PC-9 (cell line): ENCODE measurements at regions of chr11 and their contacts with region 1.

Region 1: GRCh38 chr11:110173811-110174644 is 80.8 kb downstream of the ZC3H12C start:
- DNase-seq: peak in 1 of 2 experiments; percentile 62
- H3K4me3 ChIP-seq: no peak overlapping the region
- H3K27ac ChIP-seq: 0 out of 2 replicates have a peak overlapping the region, but pooled peaks have one; percentile 17
- H3K4me1 ChIP-seq: peaks cover 11% of the 10 kb centered on the region; the same call in 1 of the 2 replicates
- H3K27me3 ChIP-seq: no peaks in the 10 kb centered on the region
- CTCF ChIP-seq: peak; percentile 69

Region 2: GRCh38 chr11:110490886-110491285 is 316.9 kb after region 1 on chr11:
- CTCF ChIA-PET with region 1: no interaction called
- POLR2A ChIA-PET with region 1: no interaction called
- intact Hi-C with region 1: no loop called
- DNase-seq: no peak
- H3K4me3 ChIP-seq: no peak overlapping the region
- H3K27ac ChIP-seq: no peak overlapping the region
- H3K4me1 ChIP-seq: no peaks in the 10 kb centered on the region
- H3K27me3 ChIP-seq: no peaks in the 10 kb centered on the region
- CTCF ChIP-seq: no peak

Region 3: DNA sequence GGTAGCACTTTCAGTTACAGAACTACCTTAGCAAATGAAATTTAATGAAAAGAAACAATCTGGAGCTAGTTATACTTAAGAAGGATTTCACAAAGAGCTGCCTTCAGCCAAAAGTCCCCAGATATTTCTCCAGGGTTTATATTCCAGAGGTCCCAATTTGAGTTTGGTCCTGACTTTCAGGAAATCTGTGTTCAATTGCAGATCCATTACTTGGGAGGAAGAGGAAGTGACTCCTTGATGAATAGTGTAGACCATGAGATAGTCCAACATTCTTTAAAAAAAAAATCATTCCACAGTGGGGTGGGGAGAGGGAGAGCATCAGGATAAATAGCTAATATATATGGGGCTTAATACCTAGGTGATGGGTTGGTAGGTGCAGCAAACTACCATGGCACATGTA is 655.8 kb after region 1 on chr11:
- CTCF ChIA-PET with region 1: no interaction called
- POLR2A ChIA-PET with region 1: no interaction called
- intact Hi-C with region 1: loop called (anchors 10 kb)
- DNase-seq: no peak
- H3K4me3 ChIP-seq: no peak overlapping the region
- H3K27ac ChIP-seq: no peak overlapping the region
- H3K4me1 ChIP-seq: no peaks in the 10 kb centered on the region
- H3K27me3 ChIP-seq: no peaks in the 10 kb centered on the region
- CTCF ChIP-seq: no peak